ENCODE measurements at regions of chr20 and their contacts with region 1.

Region 1: DNA sequence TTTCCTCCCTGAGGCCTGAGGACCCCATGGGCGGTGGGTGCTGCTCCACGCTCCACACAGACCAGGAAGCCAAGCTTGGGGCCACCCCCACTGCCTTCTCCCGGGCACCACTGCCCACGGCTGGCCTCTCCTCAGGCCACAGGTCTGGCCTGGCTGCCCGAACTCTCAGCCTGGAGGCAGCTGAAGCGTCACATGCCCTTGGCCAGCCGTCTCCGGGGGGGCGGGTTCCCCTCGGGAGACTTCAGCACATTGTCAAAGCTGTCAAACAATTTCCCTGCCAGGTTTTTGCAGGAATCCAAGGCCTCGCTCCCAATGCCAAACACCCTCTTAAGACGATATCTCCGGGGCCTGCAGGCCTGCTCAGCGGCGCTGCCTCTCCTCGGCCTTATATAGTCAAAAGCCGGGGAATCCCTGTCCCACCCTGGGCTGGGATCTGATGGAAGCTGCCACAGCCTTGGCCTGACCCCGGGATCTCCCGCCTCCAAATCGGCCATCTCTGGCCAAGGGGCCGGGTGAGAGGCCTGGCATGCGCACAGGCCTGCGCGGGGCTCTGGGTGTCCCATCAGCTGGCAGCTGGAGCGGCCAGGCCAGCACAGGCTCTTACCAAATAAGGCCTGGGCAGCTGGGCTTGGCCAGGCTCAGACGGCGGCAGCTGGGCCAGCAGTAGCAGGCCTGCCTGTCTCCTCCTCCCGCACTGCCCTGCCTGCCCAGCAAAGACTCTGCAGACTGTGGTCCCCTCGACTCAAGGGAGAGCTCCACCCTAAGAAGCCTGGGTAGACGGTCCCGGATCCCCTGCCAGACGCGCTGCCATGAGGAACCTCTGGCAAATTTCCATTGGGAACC is 49.7 kb downstream of the RBM38 start:
- DNase-seq: peak; percentile 80 to 97 (median 91)

Region 2: GRCh38 chr20:57398231-57398821 is 42.6 kb before region 1 on chr20:
- intact Hi-C with region 1: loop called (anchors 5 kb)
- DNase-seq: peak in 3 of 42 donors; percentile 5 to 46 (median 35)

Region 3: DNA sequence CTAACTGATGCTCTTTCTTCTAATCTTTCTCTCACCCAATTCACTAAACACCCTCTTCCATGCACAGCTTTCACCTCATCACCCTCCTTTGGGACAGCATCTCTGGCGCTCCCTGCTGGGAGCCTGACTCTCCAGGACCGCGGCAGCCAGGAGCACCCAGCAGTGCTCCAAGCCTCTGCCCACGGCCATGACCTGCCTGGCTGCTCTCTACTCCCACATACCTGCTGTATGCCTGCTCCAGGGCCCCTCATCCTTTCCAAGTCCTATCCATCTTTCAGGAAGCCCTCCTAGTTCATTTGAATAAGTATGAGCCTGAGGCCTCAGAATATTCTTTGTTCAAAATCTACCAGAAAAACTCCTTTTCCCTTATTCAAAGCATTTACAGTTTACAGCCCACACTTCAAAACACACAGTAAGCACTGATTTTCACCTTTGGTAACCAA is 68.8 kb after region 1 on chr20:
- intact Hi-C with region 1: no loop called
- DNase-seq: no peak

Region 4: GRCh38 chr20:57968081-57968480 is 527.2 kb after region 1 on chr20:
- intact Hi-C with region 1: no loop called
- DNase-seq: no peak

Measured in head of caudate nucleus (tissue), 42 donors.